Transverse colon (tissue), 4 donors: ENCODE measurements at regions of chr13 and their contacts with region 1.

Region 1: DNA sequence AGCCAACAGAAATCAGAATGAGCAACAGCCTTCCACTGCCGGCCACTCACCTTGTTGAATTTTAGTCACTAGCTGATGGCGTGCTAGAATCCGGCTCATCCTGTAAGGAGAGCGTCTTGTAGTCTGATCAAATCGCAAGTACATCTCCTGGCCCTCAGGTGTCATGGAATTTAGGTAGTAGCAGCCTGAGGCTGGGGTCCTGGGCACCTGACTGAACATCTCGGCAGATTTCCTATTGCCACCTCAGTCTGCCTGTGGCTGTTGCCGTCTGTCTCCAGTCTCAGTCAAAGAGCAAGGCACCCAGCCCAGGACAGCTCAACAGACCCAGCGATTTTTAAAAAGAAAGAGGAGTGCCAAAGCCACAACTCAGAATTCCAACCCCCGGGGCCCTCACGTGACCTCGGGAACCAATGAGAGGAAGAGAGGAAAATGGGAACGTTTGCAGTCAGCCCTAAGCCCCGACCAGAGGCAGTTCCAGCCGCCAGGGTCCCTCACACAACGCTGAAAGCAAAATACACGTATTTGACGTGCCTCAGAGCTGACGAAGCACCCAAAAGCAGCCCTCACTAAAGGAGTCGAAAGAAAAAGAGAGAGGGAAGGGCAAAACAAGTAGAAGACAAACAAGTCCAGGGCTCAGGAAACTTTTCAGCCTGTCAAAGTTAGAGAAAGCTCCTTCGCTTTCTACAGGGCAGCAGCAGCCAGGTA is at the start of gene STARD13:
- DNase-seq: peak; percentile 93
- H3K4me3 ChIP-seq: peak within 1 kb of the TSS; percentile 47 to 82 (median 54)
- H3K27ac ChIP-seq: peak within 1 kb of the TSS; percentile 90 to 95 (median 92)
- H3K4me1 ChIP-seq: peaks cover 5 to 44% (median 22%) of the 10 kb centered on the region in 4 donors
- H3K27me3 ChIP-seq: no peaks in the 10 kb centered on the region
- CTCF ChIP-seq: peak; percentile 26 to 70 (median 29)
- EP300 ChIP-seq: no peak
- POLR2A ChIP-seq: peak; percentile 94
- total RNA-seq, gene STARD13: 18.1 to 107 (median 41.5) TPM

Region 2: GRCh38 chr13:32278426-32278825 is 1007.1 kb before region 1 on chr13:
- in situ Hi-C with region 1: no loop called
- intact Hi-C with region 1: no loop called
- DNase-seq: no peak
- H3K4me3 ChIP-seq: no peak overlapping the region
- H3K27ac ChIP-seq: no peak overlapping the region
- H3K4me1 ChIP-seq: no peaks in the 10 kb centered on the region
- H3K27me3 ChIP-seq: no peaks in the 10 kb centered on the region
- CTCF ChIP-seq: no peak
- EP300 ChIP-seq: no peak
- POLR2A ChIP-seq: no peak

Region 3: DNA sequence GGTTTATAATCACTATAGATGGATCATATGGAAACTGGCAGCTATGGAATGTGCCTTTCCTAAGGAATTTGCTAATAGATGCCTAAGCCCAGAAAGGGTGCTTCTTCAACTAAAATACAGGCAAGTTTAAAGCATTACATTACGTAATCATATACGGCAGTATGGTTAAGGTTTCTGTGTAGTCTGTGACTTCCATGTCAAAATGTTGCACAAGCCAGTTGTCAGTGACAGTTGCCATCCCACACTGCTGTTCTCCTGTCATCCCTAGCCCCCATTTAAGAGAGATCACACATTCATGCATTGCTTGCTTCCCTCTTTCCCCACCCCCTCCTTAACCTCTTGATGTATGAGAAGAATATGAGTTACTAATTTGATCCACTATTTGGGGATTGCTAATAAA is 923.0 kb before region 1 on chr13:
- in situ Hi-C with region 1: no loop called
- intact Hi-C with region 1: no loop called
- DNase-seq: no peak
- H3K4me3 ChIP-seq: no peak overlapping the region
- H3K27ac ChIP-seq: no peak overlapping the region
- H3K4me1 ChIP-seq: no peaks in the 10 kb centered on the region
- H3K27me3 ChIP-seq: no peaks in the 10 kb centered on the region
- CTCF ChIP-seq: no peak
- EP300 ChIP-seq: no peak
- POLR2A ChIP-seq: no peak

Region 4: GRCh38 chr13:33218001-33218400 is 67.6 kb before region 1 on chr13:
- in situ Hi-C with region 1: no loop called
- intact Hi-C with region 1: loop called (anchors 10 kb)
- DNase-seq: no peak
- H3K4me3 ChIP-seq: no peak overlapping the region
- H3K27ac ChIP-seq: peak overlapping the region; percentile 68 to 78 (median 73)
- H3K4me1 ChIP-seq: peaks cover 21 to 52% (median 33%) of the 10 kb centered on the region in 4 donors
- H3K27me3 ChIP-seq: no peaks in the 10 kb centered on the region
- CTCF ChIP-seq: no peak
- EP300 ChIP-seq: no peak
- POLR2A ChIP-seq: no peak